ENCODE measurements at regions of chr11 and their contacts with region 1.

Region 1: GRCh38 chr11:4991060-4991459 is 3.6 kb upstream of the OR51L1 start:
- ATAC-seq: peak in 3 of 8 experiments; percentile 80 to 98 (median 96)
- H3K4me3 ChIP-seq: no peak overlapping the region
- H3K27ac ChIP-seq: no peak overlapping the region
- H3K4me1 ChIP-seq: no peaks in the 10 kb centered on the region

Region 2: DNA sequence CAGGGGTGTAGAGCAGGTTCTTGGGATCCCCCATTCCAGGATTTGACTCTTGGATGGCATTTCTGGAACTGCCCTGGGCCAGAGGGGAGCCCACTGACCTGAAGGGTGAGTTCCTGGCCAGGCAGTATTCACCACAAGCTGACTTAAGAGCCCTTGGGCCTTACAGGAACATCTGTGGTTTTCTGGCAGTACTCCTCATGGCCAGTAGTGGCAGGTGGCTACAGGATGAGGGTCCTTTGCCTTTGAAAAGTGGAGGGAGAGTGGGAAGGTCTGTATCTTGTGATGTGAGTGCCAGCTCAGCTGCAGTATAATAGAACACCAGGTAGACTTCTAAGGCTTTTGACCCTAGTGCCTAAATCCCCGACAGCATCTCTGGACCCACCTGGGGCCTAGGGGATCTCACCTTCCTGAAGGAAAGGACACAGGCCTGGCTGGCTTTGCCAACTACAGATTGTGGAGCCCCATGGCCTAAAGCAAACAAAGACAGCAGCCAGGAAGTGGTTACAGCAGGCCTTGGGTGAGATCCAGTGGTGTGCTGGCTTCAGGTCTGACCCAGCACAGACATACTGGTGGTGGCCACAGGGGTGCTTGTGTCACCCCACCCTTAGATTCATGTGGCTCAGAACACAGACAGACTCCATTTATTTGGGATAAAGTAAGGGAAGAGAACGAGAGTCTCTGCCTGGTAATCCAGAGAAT is 151.1 kb before region 1 on chr11:
- in situ Hi-C with region 1: loop called in 1 of 9 experiments (anchors 10 kb)
- ATAC-seq: no peak
- H3K4me3 ChIP-seq: no peak overlapping the region
- H3K27ac ChIP-seq: no peak overlapping the region
- H3K4me1 ChIP-seq: no peaks in the 10 kb centered on the region

Region 3: GRCh38 chr11:5123802-5124521 is 132.9 kb after region 1 on chr11:
- in situ Hi-C with region 1: no loop called
- ATAC-seq: peak; percentile 68 to 99 (median 86)
- H3K4me3 ChIP-seq: no peak overlapping the region
- H3K27ac ChIP-seq: no peak overlapping the region
- H3K4me1 ChIP-seq: no peaks in the 10 kb centered on the region